ENCODE measurements at regions of chr10 and their contacts with region 1.

Region 1: GRCh38 chr10:69087590-69088470 is at the start of gene SRGN:
- DNase-seq: peak; percentile 87
- H3K4me3 Mint-ChIP-seq: peak within 1 kb of the TSS; percentile 94
- H3K27ac Mint-ChIP-seq: peak within 1 kb of the TSS; percentile 96
- H3K4me1 Mint-ChIP-seq: peaks cover 41% of the 10 kb centered on the region
- H3K27me3 Mint-ChIP-seq: no peaks in the 10 kb centered on the region
- total RNA-seq, gene SRGN: 949 to 966 TPM

Region 2: DNA sequence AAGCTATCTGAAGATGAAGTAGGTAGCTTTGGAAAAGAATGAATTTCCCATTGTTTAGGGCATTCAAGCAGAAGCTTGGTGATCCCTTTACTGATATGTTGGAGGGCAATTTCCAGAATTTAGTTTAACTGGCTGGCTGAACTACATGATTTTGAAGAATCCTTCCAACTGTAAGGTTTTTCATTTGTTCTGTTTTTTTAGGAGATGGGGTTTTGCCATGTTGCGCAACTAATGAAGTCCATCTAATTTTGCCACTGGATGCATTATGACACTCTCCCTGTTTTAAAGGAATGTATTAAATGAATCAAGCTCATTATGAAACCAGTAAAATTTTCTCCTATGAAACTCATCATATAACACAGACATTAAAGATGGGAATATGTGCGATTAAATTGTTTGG is 192.8 kb before region 1 on chr10:
- CTCF ChIA-PET with region 1: no interaction called
- POLR2A ChIA-PET with region 1: no interaction called
- intact Hi-C with region 1: no loop called
- DNase-seq: no peak
- H3K4me3 Mint-ChIP-seq: no peak overlapping the region
- H3K27ac Mint-ChIP-seq: no peak overlapping the region
- H3K4me1 Mint-ChIP-seq: peaks cover 4% of the 10 kb centered on the region
- H3K27me3 Mint-ChIP-seq: no peaks in the 10 kb centered on the region

Region 3: DNA sequence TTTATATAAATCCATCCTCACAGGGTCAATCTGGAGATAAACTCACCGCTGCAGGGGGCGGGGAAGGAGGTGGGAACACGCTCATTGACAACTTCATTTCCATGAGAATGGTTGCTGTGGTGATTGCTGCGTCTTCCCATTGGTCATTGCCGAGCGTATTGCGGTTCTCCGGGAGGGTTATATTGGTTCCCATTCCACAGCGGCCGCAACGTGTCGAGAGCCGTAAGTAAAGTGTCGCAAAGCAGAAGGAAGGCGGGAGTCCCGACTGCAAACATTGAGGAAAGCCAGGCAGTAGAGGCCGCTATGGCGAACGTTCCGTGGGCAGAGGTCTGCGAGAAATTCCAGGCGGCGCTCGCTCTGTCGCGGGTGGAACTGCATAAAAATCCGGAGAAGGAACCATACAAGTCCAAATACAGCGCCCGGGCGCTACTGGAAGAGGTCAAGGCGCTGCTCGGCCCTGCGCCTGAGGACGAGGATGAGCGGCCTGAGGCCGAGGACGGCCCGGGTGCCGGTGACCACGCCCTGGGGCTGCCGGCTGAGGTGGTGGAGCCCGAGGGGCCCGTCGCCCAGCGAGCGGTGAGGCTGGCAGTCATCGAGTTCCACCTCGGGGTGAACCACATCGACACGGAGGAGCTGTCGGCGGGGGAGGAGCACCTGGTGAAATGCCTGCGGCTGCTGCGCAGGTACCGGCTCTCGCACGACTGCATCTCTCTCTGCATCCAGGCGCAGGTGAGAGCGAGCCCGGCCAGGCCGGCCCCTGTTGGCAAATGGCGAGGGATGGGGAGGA is 99.1 kb before region 1 on chr10 and contains the start of gene KIFBP:
- CTCF ChIA-PET with region 1: interaction called, 26 read pairs
- POLR2A ChIA-PET with region 1: interaction called, 5 read pairs
- intact Hi-C with region 1: loop called (anchors 1 kb)
- DNase-seq: peak; percentile 93
- H3K4me3 Mint-ChIP-seq: peak within 1 kb of the TSS; percentile 92
- H3K27ac Mint-ChIP-seq: peak within 1 kb of the TSS; percentile 83
- H3K4me1 Mint-ChIP-seq: peaks cover 49% of the 10 kb centered on the region
- H3K27me3 Mint-ChIP-seq: no peaks in the 10 kb centered on the region
- total RNA-seq, gene KIFBP: 23.0 to 25.2 TPM

Region 4: GRCh38 chr10:69025370-69025896 is 62.4 kb before region 1 on chr10:
- CTCF ChIA-PET with region 1: interaction called, 5 read pairs
- POLR2A ChIA-PET with region 1: interaction called, 8 read pairs
- intact Hi-C with region 1: loop called (anchors 1 kb)
- DNase-seq: no peak
- H3K4me3 Mint-ChIP-seq: no peak overlapping the region
- H3K27ac Mint-ChIP-seq: no peak overlapping the region
- H3K4me1 Mint-ChIP-seq: peaks cover 15% of the 10 kb centered on the region
- H3K27me3 Mint-ChIP-seq: no peaks in the 10 kb centered on the region

Region 5: DNA sequence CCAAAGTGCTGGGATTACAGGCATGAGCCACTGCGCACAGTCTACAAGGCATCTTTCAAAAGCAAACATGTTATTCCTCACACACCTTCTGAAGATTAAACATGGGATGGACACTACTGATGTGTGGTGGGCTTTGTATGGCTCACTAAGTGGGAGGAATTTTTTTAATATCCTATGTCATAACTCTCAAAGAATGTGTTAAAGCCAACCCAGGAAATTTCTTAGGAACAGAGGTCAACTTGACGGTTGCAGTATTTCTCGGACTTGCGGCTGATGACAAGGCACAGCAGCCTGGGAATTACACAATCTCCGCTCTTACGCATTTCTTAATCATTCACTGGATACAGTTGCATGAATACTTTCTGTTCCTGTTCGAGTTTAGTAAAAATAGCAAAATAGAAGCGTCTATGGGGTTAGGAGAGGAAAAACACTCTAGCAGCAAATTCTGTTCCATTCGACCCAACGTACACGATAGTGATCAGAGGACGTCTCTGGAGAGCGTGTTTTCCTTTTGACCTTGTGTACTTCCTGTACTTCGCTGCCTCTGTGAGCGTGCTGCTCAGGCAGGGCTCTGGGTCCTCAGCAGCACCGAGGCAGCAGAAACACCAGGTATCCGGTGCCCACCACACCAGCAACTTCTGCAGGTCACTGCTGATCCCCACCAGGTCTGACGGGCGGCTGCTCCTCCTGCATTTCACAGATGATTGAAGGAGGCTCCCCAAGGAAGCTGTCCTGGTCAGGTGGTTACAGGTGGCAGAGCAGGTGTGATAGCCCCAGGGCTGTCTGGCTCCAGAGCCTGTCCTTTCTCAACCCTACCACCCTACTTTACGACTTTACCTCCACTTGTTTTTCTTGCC is 26.3 kb before region 1 on chr10:
- CTCF ChIA-PET with region 1: interaction called, 13 read pairs
- POLR2A ChIA-PET with region 1: interaction called, 92 read pairs
- intact Hi-C with region 1: loop called (anchors 1 kb)
- DNase-seq: peak; percentile 49
- H3K4me3 Mint-ChIP-seq: peak overlapping the region; percentile 61
- H3K27ac Mint-ChIP-seq: peak overlapping the region; percentile 70
- H3K4me1 Mint-ChIP-seq: peaks cover 62% of the 10 kb centered on the region
- H3K27me3 Mint-ChIP-seq: no peaks in the 10 kb centered on the region